ENCODE measurements at regions of chr4 and their contacts with region 1.

Region 1: DNA sequence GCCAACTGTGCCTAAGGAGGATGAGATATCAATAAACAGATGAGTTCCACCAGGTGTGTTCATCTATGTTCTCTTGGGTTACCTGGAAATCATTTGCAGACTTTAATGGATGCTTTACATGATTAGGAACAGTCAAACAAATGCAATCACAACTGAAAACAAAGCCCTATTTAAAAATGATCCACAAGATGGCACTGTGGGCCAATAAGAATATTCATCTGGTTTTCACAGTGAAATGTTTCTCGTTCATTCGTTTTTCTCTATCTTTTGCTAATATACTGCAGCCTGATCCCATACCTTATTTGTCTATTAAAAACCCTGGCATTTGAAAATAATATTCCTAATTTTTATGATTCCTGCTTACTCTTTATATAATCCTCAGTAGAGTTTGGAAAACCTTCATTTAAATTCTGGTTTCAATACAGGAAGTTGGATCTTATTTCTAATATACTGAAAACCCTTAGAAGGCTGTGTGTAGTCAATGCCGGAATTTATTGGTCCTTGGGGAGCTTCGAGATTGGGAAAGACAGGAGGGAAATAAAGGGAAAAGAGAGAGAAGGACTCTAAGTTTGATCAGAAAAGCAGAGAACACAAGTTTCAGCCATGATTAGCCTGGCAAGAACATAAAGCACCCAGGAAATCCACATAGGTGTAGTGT is 63.8 kb upstream of the TAPT1 start:
- DNase-seq: peak; percentile 9 to 17
- ATAC-seq: peak; percentile 44 to 47; a peak in 3 of 6 replicates
- H3K4me3 ChIP-seq: no peak overlapping the region
- H3K27ac ChIP-seq: no peak overlapping the region
- H3K4me1 ChIP-seq: no peaks in the 10 kb centered on the region
- CTCF ChIP-seq: peak; percentile 60
- EP300 ChIP-seq: no peak
- POLR2A ChIP-seq: no peak
- RAD21 ChIP-seq: peak; percentile 64 to 65

Region 2: GRCh38 chr4:16225863-16226815 is 63.9 kb before region 1 on chr4 and contains the start of gene TAPT1:
- CTCF ChIA-PET with region 1: no interaction called
- POLR2A ChIA-PET with region 1: no interaction called
- DNase-seq: peak; percentile 38 to 48
- ATAC-seq: peak; percentile 62 to 80
- H3K4me3 ChIP-seq: peak within 1 kb of the TSS; percentile 95
- H3K27ac ChIP-seq: peak within 1 kb of the TSS; percentile 100
- H3K4me1 ChIP-seq: peaks cover 25% of the 10 kb centered on the region
- CTCF ChIP-seq: no peak
- EP300 ChIP-seq: no peak
- POLR2A ChIP-seq: peak; percentile 35
- RAD21 ChIP-seq: no peak
- polyA plus RNA-seq, gene TAPT1: 17.1 and 20.2 TPM in 2 replicates

Region 3: GRCh38 chr4:16278178-16278577 is 11.8 kb before region 1 on chr4:
- CTCF ChIA-PET with region 1: interaction called, 10 read pairs
- POLR2A ChIA-PET with region 1: no interaction called
- DNase-seq: no peak
- ATAC-seq: no peak
- H3K4me3 ChIP-seq: no peak overlapping the region
- H3K27ac ChIP-seq: no peak overlapping the region
- H3K4me1 ChIP-seq: no peaks in the 10 kb centered on the region
- CTCF ChIP-seq: no peak
- EP300 ChIP-seq: no peak
- POLR2A ChIP-seq: no peak
- RAD21 ChIP-seq: no peak

Region 4: DNA sequence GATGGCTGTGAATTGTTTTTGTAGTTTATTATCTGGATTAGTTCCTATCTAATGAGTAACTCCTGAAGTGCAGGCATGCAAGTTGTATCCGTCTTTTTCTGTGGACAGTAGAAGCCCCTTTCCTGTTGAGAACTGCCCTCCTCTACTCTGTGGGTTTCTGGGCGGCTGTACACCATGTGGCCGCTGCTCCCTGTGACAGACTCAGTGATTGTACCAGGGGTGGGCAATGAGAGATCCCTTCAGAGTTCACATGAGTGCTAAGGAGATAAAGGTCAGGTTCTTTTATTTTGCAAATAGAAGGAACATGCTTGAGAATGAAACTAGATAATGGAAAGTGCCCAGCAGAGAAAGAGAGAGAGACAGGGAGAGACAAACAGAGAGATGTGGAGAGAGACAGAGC is 12.6 kb after region 1 on chr4:
- CTCF ChIA-PET with region 1: no interaction called
- POLR2A ChIA-PET with region 1: no interaction called
- DNase-seq: no peak
- ATAC-seq: no peak
- H3K4me3 ChIP-seq: no peak overlapping the region
- H3K27ac ChIP-seq: no peak overlapping the region
- H3K4me1 ChIP-seq: no peaks in the 10 kb centered on the region
- CTCF ChIP-seq: no peak
- EP300 ChIP-seq: no peak
- POLR2A ChIP-seq: no peak
- RAD21 ChIP-seq: no peak

Region 5: GRCh38 chr4:16443504-16444088 is 153.6 kb after region 1 on chr4:
- CTCF ChIA-PET with region 1: interaction called, 14 read pairs
- POLR2A ChIA-PET with region 1: no interaction called
- DNase-seq: peak; percentile 27 to 34
- ATAC-seq: peak in 1 of 2 experiments; percentile 68; a peak in 3 of 6 replicates
- H3K4me3 ChIP-seq: no peak overlapping the region
- H3K27ac ChIP-seq: no peak overlapping the region
- H3K4me1 ChIP-seq: no peaks in the 10 kb centered on the region
- CTCF ChIP-seq: peak; percentile 38
- EP300 ChIP-seq: no peak
- POLR2A ChIP-seq: no peak
- RAD21 ChIP-seq: peak in 1 of 2 experiments; percentile 25; a peak in 1 of 5 replicates

Region 6: GRCh38 chr4:17447675-17448298 is 1157.8 kb after region 1 on chr4:
- CTCF ChIA-PET with region 1: interaction called, 10 read pairs
- POLR2A ChIA-PET with region 1: no interaction called
- DNase-seq: peak; percentile 26 to 61
- ATAC-seq: peak; percentile 94 to 96
- H3K4me3 ChIP-seq: no peak overlapping the region
- H3K27ac ChIP-seq: no peak overlapping the region
- H3K4me1 ChIP-seq: no peaks in the 10 kb centered on the region
- CTCF ChIP-seq: peak; percentile 55
- EP300 ChIP-seq: no peak
- POLR2A ChIP-seq: no peak
- RAD21 ChIP-seq: peak; percentile 59 to 72; a peak in 3 of 5 replicates